ENCODE measurements at regions of chr14 and their contacts with region 1.

Region 1: DNA sequence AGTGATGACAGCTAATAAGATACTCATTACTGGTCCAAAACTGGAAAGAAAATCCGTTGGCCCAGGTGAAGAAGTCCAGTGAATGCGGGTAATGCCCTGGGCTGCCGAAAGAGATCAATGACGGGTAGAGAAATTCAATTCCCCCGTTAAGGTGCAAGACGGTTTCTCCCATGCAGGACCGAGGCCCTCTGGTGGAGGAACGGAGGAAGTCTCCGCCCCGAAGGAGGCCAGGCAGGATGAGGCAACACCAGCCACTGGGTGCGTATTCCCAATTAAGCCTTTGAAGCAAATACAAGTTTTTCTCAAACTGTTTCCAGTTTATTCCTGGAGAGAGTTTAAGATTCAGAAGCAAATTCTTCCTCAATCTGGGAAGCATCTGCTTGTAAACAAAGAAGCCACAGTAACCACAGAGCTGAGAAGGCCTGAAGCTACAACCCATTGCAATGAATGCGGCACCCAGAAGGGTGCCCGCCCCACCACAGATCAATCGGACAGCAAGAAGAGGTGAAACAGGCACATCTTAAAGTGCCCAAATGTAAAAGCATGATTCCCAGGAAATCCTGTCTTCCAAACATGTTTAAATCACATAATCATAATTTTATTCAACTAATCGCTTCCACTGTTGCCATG is 118.5 kb downstream of the TTC7B start:
- DNase-seq: peak; percentile 92
- H3K4me3 Mint-ChIP-seq: no peak overlapping the region
- H3K27ac Mint-ChIP-seq: no peak overlapping the region
- H3K4me1 Mint-ChIP-seq: peaks cover 5% of the 10 kb centered on the region
- H3K27me3 Mint-ChIP-seq: no peaks in the 10 kb centered on the region

Region 2: GRCh38 chr14:90301668-90302090 is 396.0 kb before region 1 on chr14:
- intact Hi-C with region 1: loop called (anchors 2 kb)
- DNase-seq: no peak
- H3K4me3 Mint-ChIP-seq: no peak overlapping the region
- H3K27ac Mint-ChIP-seq: peak overlapping the region; percentile 6
- H3K4me1 Mint-ChIP-seq: peaks cover 12% of the 10 kb centered on the region
- H3K27me3 Mint-ChIP-seq: no peaks in the 10 kb centered on the region

Region 3: DNA sequence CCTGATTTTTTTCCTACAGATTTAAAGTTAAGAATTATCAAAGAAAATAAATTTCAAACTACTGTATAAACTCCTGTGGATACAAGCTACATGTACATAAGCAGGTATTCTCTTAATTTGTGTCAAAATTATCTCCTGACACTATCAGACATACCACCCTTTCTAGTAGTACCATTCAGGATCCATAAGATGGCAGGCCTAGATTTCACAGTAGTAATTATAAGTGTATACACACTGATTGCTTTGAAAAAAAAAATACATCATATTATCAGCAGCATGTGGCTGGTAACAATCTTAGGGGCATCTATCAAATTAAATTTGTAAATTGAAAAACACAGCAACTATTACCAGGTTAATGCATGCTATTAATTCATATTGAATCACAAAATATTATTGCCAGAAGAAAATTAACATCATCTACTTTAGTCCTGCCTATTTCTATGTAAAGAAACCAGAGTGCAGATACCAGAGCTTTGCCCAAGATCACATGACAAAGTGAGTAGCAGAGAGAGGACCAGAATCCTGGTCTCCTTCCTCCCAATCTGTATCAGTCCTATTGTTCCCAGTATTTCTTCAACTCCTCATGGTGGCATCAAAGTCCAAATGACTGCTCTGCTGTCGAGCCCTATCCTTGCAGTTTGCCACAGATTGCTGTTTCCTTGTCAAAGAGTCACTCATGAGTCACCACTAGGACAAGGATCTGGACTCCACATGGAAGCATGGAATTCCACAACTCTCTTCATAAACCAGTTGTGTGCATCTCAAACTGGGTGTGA is 328.6 kb before region 1 on chr14:
- intact Hi-C with region 1: loop called (anchors 1 kb)
- DNase-seq: no peak
- H3K4me3 Mint-ChIP-seq: no peak overlapping the region
- H3K27ac Mint-ChIP-seq: no peak overlapping the region
- H3K4me1 Mint-ChIP-seq: no peaks in the 10 kb centered on the region
- H3K27me3 Mint-ChIP-seq: peaks cover 16% of the 10 kb centered on the region

Region 4: GRCh38 chr14:90534091-90534837 is 163.4 kb before region 1 on chr14:
- intact Hi-C with region 1: loop called (anchors 10 kb)
- DNase-seq: no peak
- H3K4me3 Mint-ChIP-seq: no peak overlapping the region
- H3K27ac Mint-ChIP-seq: no peak overlapping the region
- H3K4me1 Mint-ChIP-seq: peaks cover 3% of the 10 kb centered on the region
- H3K27me3 Mint-ChIP-seq: no peaks in the 10 kb centered on the region

Region 5: DNA sequence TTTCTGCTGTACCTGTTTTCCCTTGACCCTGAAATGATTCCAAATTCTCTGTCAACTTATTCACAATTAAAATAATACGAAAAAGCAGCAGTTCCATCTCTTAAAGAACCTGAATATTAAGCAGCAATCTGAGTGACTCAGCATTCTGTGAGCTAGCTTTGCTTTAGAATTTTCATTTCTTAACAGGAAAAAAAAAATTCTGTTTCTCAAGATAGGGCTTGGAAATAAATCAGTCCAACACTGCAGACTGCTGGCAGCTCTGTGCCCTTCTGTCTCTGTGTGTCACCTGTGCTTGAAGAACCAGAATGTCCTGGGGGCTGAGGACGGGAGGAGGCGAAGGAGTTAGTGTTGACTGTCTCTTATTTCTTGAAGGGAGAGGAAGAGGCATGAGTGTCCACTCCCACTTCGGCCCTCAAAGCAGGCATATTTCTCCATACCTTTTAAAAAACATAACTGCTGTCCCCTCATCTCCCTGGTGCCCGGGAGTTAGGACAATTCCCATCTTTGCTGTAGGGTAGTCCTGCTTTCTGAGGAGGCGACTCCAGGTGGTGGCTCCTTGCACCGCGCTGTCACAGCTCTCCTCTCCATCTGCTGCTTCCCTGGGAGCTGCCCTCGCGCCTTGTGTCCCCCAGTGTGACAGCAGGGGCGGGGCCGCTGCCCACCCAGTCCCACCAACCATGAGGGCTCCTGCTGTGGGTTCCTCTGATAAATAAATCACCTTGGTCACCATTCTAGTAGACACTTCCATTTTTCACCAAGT is 97.8 kb before region 1 on chr14:
- intact Hi-C with region 1: loop called (anchors 10 kb)
- DNase-seq: no peak
- H3K4me3 Mint-ChIP-seq: no peak overlapping the region
- H3K27ac Mint-ChIP-seq: no peak overlapping the region
- H3K4me1 Mint-ChIP-seq: no peaks in the 10 kb centered on the region
- H3K27me3 Mint-ChIP-seq: peaks cover 20% of the 10 kb centered on the region

Region 6: GRCh38 chr14:90658541-90658967 is 39.1 kb before region 1 on chr14:
- intact Hi-C with region 1: loop called (anchors 5 kb)
- DNase-seq: peak; percentile 64
- H3K4me3 Mint-ChIP-seq: no peak overlapping the region
- H3K27ac Mint-ChIP-seq: no peak overlapping the region
- H3K4me1 Mint-ChIP-seq: peaks cover 14% of the 10 kb centered on the region
- H3K27me3 Mint-ChIP-seq: peaks cover 9% of the 10 kb centered on the region

Region 7: GRCh38 chr14:90721619-90722305 is 24.1 kb after region 1 on chr14:
- intact Hi-C with region 1: no loop called
- DNase-seq: no peak
- H3K4me3 Mint-ChIP-seq: no peak overlapping the region
- H3K27ac Mint-ChIP-seq: no peak overlapping the region
- H3K4me1 Mint-ChIP-seq: no peaks in the 10 kb centered on the region
- H3K27me3 Mint-ChIP-seq: peaks cover 3% of the 10 kb centered on the region

Measured in activated CD4-positive, alpha-beta T cell treated with anti-CD3 and anti-CD28 coated beads, Interleukin-2, amount 10 ng/mL, durations not matched to agents 24 days and 14 days (primary cell).